SK-MEL-5 (cell line): ENCODE measurements at regions of chr5 and their contacts with region 1.

Region 1: GRCh38 chr5:139863855-139864558 is 68.4 kb downstream of the PSD2 start:
- DNase-seq: peak; percentile 69

Region 2: GRCh38 chr5:139593716-139594319 is 270.2 kb before region 1 on chr5:
- in situ Hi-C with region 1: no loop called
- DNase-seq: no peak

Region 3: DNA sequence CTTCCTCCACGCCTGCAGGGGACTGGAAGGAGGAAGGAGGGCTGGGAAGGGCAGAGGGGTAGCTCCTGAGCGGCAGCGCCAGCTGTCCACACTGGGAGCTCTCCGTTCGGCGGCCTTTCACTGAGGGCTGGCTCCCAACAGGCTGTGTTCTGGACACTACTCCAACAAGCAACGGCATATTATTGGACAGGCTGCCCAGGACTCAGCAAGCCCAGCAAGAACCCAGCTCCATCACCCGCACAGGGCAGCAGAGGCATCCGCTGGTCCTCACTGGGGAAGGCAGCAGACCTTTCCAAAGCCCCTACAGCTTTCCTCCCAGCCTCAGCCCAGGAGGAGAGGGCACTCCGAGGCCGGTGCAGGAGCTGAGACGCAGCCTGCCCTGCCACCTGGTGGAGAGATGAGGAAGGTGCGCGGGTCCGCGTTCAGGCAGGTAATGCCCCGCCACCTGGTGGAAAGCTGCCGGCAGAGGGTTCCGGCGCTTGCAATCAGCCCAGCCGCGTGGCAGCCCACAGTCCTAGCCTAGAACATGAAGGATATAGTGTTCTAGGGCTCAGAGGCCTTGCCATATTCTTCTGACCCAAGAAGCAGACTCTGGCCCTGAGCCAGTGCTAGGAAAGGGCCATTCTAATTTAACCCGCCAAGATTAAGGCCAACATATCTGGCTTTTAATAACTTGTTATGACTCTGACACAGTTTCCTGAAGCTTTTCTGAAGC is 104.7 kb after region 1 on chr5:
- in situ Hi-C with region 1: loop called (anchors 10 kb)
- DNase-seq: peak; percentile 87